Naive thymus-derived CD4-positive, alpha-beta T cell (primary cell): ENCODE measurements at regions of chr20 and their contacts with region 1.

Region 1: DNA sequence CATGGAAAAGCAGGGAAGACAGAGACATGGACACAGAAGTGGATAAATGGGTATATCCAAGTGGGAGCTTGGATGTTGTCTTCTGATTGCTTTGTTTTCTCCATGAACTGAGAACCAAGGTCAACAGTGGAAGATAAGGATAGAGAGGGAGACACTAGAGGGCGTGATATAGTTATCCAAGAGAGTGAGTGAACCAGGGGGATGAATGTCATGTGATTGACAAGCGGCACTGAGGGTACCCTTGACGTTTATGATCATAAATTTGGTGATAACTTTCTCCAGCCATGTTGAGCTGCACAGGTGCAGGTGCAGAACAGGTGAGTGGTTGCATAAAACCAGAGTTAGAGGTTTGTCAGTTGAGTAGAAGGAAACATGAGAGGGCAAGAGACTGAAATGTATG is 20.7 kb downstream of the EBF4 start:
- DNase-seq: peak in 7 of 9 donors; percentile 30 to 64 (median 51)
- ATAC-seq: peak; percentile 73
- H3K4me3 ChIP-seq: no peak overlapping the region
- H3K4me3 Mint-ChIP-seq: no peak overlapping the region
- H3K27ac ChIP-seq: no peak overlapping the region
- H3K27ac Mint-ChIP-seq: no peak overlapping the region
- H3K4me1 ChIP-seq: peaks cover 0 to 3% of the 10 kb centered on the region in 2 donors
- H3K4me1 Mint-ChIP-seq: peaks cover 0 to 4% (median 0%) of the 10 kb centered on the region in 7 donors
- H3K27me3 ChIP-seq: no peaks in the 10 kb centered on the region
- H3K27me3 Mint-ChIP-seq: peaks cover 0 to 4% (median 0%) of the 10 kb centered on the region in 5 donors

Region 2: GRCh38 chr20:2693286-2694000 is 19.8 kb before region 1 on chr20:
- CTCF ChIA-PET with region 1: interaction called, 6 read pairs
- POLR2A ChIA-PET with region 1: no interaction called
- intact Hi-C with region 1: loop called in 1 of 2 experiments (anchors 1 kb)
- DNase-seq: peak; percentile 15 to 70 (median 38)
- ATAC-seq: peak; percentile 73
- H3K4me3 ChIP-seq: no peak overlapping the region
- H3K4me3 Mint-ChIP-seq: peak overlapping the region in 4 of 10 donors; percentile 14 to 72 (median 42)
- H3K27ac ChIP-seq: no peak overlapping the region
- H3K27ac Mint-ChIP-seq: no peak overlapping the region
- H3K4me1 ChIP-seq: peaks cover 2% of the 10 kb centered on the region in 2 donors
- H3K4me1 Mint-ChIP-seq: peaks cover 16 to 26% (median 20%) of the 10 kb centered on the region in 7 donors
- H3K27me3 ChIP-seq: peaks cover 4 to 9% of the 10 kb centered on the region in 2 donors
- H3K27me3 Mint-ChIP-seq: peaks cover 16 to 55% (median 23%) of the 10 kb centered on the region in 5 donors

Region 3: GRCh38 chr20:2729251-2729713 is 16.0 kb after region 1 on chr20:
- CTCF ChIA-PET with region 1: interaction called, 70 read pairs
- POLR2A ChIA-PET with region 1: interaction called, 18 read pairs
- intact Hi-C with region 1: loop called in 1 of 2 experiments (anchors 1 kb)
- DNase-seq: peak in 7 of 9 donors; percentile 50 to 72 (median 66)
- ATAC-seq: peak; percentile 95
- H3K4me3 ChIP-seq: peak overlapping the region; percentile 2
- H3K4me3 Mint-ChIP-seq: peak overlapping the region; percentile 55 to 87 (median 71)
- H3K27ac ChIP-seq: peak overlapping the region; percentile 62
- H3K27ac Mint-ChIP-seq: peak overlapping the region; percentile 71 to 96 (median 90)
- H3K4me1 ChIP-seq: peaks cover 20 to 33% of the 10 kb centered on the region in 2 donors
- H3K4me1 Mint-ChIP-seq: peaks cover 9 to 47% (median 36%) of the 10 kb centered on the region in 7 donors
- H3K27me3 ChIP-seq: no peaks in the 10 kb centered on the region
- H3K27me3 Mint-ChIP-seq: peaks cover 0 to 36% (median 0%) of the 10 kb centered on the region in 5 donors

Region 4: GRCh38 chr20:2752567-2753460 is 39.5 kb after region 1 on chr20:
- CTCF ChIA-PET with region 1: interaction called, 29 read pairs
- POLR2A ChIA-PET with region 1: interaction called, 12 read pairs
- intact Hi-C with region 1: loop called in 1 of 2 experiments (anchors 1 kb)
- DNase-seq: peak; percentile 36 to 63 (median 53)
- ATAC-seq: peak; percentile 48
- H3K4me3 ChIP-seq: peak overlapping the region; percentile 64
- H3K4me3 Mint-ChIP-seq: peak overlapping the region; percentile 74 to 90 (median 86)
- H3K27ac ChIP-seq: no peak overlapping the region
- H3K27ac Mint-ChIP-seq: peak overlapping the region in 8 of 9 donors; percentile 17 to 85 (median 56)
- H3K4me1 ChIP-seq: peaks cover 12 to 18% of the 10 kb centered on the region in 2 donors
- H3K4me1 Mint-ChIP-seq: peaks cover 20 to 35% (median 27%) of the 10 kb centered on the region in 7 donors
- H3K27me3 ChIP-seq: no peaks in the 10 kb centered on the region
- H3K27me3 Mint-ChIP-seq: peaks cover 6 to 54% (median 9%) of the 10 kb centered on the region in 5 donors

Region 5: GRCh38 chr20:2849529-2849928 is 136.2 kb after region 1 on chr20:
- CTCF ChIA-PET with region 1: interaction called, 3 read pairs
- POLR2A ChIA-PET with region 1: no interaction called
- intact Hi-C with region 1: loop called in 1 of 2 experiments (anchors 1 kb)
- DNase-seq: no peak
- ATAC-seq: no peak
- H3K4me3 ChIP-seq: no peak overlapping the region
- H3K4me3 Mint-ChIP-seq: no peak overlapping the region
- H3K27ac ChIP-seq: no peak overlapping the region
- H3K27ac Mint-ChIP-seq: peak overlapping the region in 1 of 9 donors; percentile 18
- H3K4me1 ChIP-seq: peaks cover 0 to 10% of the 10 kb centered on the region in 2 donors
- H3K4me1 Mint-ChIP-seq: peaks cover 14 to 34% (median 27%) of the 10 kb centered on the region in 7 donors
- H3K27me3 ChIP-seq: no peaks in the 10 kb centered on the region
- H3K27me3 Mint-ChIP-seq: no peaks in the 10 kb centered on the region

Region 6: GRCh38 chr20:3000852-3001523 is 287.7 kb after region 1 on chr20:
- CTCF ChIA-PET with region 1: interaction called, 4 read pairs
- POLR2A ChIA-PET with region 1: no interaction called
- intact Hi-C with region 1: loop called (anchors 1 kb)
- DNase-seq: peak in 7 of 9 donors; percentile 11 to 66 (median 49)
- ATAC-seq: peak; percentile 88
- H3K4me3 ChIP-seq: no peak overlapping the region
- H3K4me3 Mint-ChIP-seq: no peak overlapping the region
- H3K27ac ChIP-seq: no peak overlapping the region
- H3K27ac Mint-ChIP-seq: peak overlapping the region in 1 of 9 donors; percentile 18
- H3K4me1 ChIP-seq: no peaks in the 10 kb centered on the region
- H3K4me1 Mint-ChIP-seq: peaks cover 0 to 2% (median 0%) of the 10 kb centered on the region in 7 donors
- H3K27me3 ChIP-seq: no peaks in the 10 kb centered on the region
- H3K27me3 Mint-ChIP-seq: no peaks in the 10 kb centered on the region